Ovary (tissue), 10 donors: ENCODE measurements at regions of chr17 and their contacts with region 1.

Region 1: GRCh38 chr17:59746849-59747445 is 39.5 kb downstream of the VMP1 start:
- DNase-seq: no peak
- H3K4me3 ChIP-seq: no peak overlapping the region
- H3K27ac ChIP-seq: no peak overlapping the region
- H3K4me1 ChIP-seq: no peaks in the 10 kb centered on the region
- H3K27me3 ChIP-seq: no peaks in the 10 kb centered on the region
- CTCF ChIP-seq: peak in 2 of 3 donors; percentile 61 to 64
- EP300 ChIP-seq: no peak
- POLR2A ChIP-seq: no peak

Region 2: DNA sequence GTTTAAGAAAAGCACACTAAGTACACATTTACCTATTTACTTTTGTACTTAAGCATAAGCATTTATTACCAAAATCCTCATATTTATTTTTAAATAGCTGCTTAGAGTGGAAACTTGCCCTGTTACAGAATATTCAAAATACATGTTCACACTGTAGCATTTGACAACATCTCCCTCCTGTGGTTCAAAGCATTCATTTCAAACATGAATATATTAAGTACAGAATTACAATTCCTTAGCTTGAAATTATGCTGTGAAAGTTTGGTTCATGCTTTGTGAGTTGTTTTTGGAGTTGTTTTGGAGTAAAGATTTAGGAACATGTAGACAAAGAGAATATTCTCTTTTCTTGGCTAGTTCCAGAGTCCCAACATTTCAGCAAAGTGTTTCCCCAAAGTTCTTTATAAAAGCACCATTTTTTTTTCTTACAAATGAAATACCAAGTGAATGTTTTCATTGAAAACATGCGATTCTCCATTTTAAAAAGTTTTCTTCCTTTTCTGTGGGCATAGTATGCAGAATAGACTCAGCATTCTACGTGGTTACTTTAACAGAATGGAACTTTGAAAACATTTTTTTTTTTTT is 112.6 kb after region 1 on chr17:
- intact Hi-C with region 1: loop called in 3 of 4 experiments (anchors 2 to 5 kb)
- DNase-seq: no peak
- H3K4me3 ChIP-seq: no peak overlapping the region
- H3K27ac ChIP-seq: no peak overlapping the region
- H3K4me1 ChIP-seq: no peaks in the 10 kb centered on the region
- H3K27me3 ChIP-seq: no peaks in the 10 kb centered on the region
- CTCF ChIP-seq: peak; percentile 36 to 74 (median 66)
- EP300 ChIP-seq: no peak
- POLR2A ChIP-seq: no peak

Region 3: GRCh38 chr17:59867691-59868090 is 120.7 kb after region 1 on chr17:
- intact Hi-C with region 1: loop called in 2 of 4 experiments (anchors 5 kb)
- DNase-seq: no peak
- H3K4me3 ChIP-seq: no peak overlapping the region
- H3K27ac ChIP-seq: no peak overlapping the region
- H3K4me1 ChIP-seq: no peaks in the 10 kb centered on the region
- H3K27me3 ChIP-seq: no peaks in the 10 kb centered on the region
- CTCF ChIP-seq: no peak
- EP300 ChIP-seq: no peak
- POLR2A ChIP-seq: no peak

Region 4: GRCh38 chr17:60036796-60037612 is 290.1 kb after region 1 on chr17:
- intact Hi-C with region 1: loop called in 1 of 4 experiments (anchors 10 kb)
- DNase-seq: peak; percentile 41 to 77 (median 65)
- H3K4me3 ChIP-seq: no peak overlapping the region
- H3K27ac ChIP-seq: no peak overlapping the region
- H3K4me1 ChIP-seq: peaks cover 1% of the 10 kb centered on the region
- H3K27me3 ChIP-seq: no peaks in the 10 kb centered on the region
- CTCF ChIP-seq: peak; percentile 43 to 54 (median 52)
- EP300 ChIP-seq: no peak
- POLR2A ChIP-seq: no peak